ENCODE measurements at regions of chr15 and their contacts with region 1.

Region 1: DNA sequence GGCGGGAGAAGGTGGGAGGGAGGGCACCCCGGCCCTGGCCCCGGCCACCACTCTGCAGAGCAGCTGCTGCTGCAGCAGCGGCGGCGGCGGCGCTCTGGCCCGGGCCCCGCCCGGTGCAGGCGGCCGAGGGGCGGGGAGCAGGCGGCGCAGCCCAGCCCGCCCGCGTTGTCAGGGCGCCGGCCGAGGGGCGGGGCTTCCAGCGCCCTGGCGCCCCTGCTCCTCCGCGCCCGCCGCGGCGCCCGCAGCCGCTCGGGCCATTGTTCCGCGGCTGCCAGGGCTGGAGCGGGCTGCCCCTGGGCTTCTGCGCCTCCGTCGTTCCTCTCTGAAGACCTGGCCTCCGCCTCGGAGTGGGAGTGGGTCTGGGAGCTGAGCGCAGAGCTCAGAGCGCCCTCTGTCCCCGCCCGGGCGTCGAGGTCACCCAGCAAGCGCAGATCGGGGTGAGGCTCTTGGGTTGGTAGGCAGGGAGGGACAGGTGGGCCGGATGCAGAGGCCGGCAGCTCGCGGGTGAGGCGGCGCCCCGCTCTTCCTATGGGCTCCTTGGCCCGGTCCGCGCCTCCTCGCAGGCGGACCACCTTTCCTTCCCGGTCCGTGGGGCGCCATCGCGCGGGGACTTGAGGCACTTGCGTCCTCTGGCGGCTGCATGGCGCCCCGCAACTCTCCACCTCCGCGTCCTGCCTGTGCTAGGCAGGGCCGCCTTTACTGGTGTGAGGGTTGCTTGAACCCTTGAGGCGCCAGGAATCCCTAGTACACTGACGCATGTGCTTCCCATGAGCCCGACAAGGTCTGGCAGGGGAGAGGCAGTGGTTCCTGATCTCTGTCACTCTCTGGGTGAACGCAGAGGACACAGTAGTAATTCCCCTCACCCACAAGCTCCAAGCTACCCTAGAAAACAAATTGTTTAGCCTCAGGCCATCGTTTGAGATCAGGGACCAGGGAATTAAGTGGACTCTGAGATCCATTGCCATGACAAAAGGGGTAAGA is at the start of gene LPCAT4:
- DNase-seq: peak; percentile 90 to 97 (median 95)
- H3K4me3 ChIP-seq: peak within 1 kb of the TSS; percentile 77 to 85 (median 83)
- H3K27ac ChIP-seq: peak within 1 kb of the TSS; percentile 91 to 96
- H3K4me1 ChIP-seq: peaks cover 0 to 17% (median 0%) of the 10 kb centered on the region in 3 donors
- H3K27me3 ChIP-seq: no peaks in the 10 kb centered on the region
- CTCF ChIP-seq: peak; percentile 95
- total RNA-seq, gene LPCAT4: 37.5 TPM

Region 2: DNA sequence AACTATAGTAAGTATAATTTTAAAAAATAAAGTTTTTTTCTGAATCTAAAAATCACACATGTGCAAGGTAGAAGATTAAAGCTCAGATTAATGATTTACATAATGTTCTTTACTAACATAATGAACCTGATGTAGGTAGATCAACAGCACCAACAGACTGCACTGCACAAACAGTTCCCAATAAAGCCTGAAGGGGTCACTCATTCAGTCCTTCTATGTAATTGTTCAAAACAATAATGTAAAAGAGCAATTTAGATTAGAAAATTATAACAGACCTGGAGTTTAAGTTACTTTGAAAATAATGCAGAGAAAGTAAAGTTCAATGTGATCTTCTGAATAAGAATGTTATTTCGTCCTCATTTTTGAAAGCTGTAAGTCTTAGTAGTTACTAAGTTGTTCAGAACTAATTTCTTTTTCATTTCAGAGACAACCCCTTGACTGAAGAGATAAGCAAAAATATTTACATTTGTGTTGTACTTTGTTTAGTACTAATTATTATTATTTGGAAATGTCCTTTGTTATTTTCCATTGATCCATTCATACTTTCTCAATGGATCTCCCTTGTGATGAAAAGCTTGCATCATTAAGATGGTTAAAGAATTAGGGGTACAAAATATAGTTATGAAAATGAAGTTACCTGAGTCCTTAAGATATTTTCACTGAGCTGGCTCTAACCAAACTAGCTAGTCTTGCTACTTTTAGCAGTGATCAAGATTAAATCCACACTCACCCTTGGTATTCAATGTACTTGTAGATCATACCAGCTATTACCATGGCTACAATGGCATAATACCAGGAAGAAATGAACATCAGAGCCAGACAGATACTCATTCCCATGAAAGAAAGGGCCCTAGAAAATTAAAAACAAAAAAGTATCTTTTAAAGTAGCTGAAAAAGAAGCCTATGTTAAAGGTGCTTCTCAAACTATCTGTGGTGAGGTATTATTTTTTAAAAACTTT is 125.7 kb before region 1 on chr15:
- intact Hi-C with region 1: loop called (anchors 5 kb)
- DNase-seq: peak in 3 of 5 donors; percentile 12 to 63 (median 42)
- H3K4me3 ChIP-seq: no peak overlapping the region
- H3K27ac ChIP-seq: no peak overlapping the region
- H3K4me1 ChIP-seq: no peaks in the 10 kb centered on the region
- H3K27me3 ChIP-seq: no peaks in the 10 kb centered on the region
- CTCF ChIP-seq: peak; percentile 52

Region 3: GRCh38 chr15:35458176-35458856 is 1090.9 kb after region 1 on chr15:
- intact Hi-C with region 1: no loop called
- DNase-seq: no peak
- H3K4me3 ChIP-seq: no peak overlapping the region
- H3K27ac ChIP-seq: no peak overlapping the region
- H3K4me1 ChIP-seq: no peaks in the 10 kb centered on the region
- H3K27me3 ChIP-seq: no peaks in the 10 kb centered on the region
- CTCF ChIP-seq: no peak

Measured in kidney (tissue), 22 donors.